ENCODE measurements at regions of chr19 and their contacts with region 1.

Region 1: GRCh38 chr19:7680606-7681339 is at the start of gene TRAPPC5:
- DNase-seq: peak; percentile 86
- ATAC-seq: peak; percentile 60
- H3K4me3 Mint-ChIP-seq: peak within 1 kb of the TSS; percentile 79
- H3K27ac Mint-ChIP-seq: no peak within 1 kb of the TSS
- H3K4me1 Mint-ChIP-seq: peaks cover 16% of the 10 kb centered on the region
- H3K27me3 Mint-ChIP-seq: peaks cover 37% of the 10 kb centered on the region
- CTCF ChIP-seq: peak; percentile 82
- total RNA-seq, gene TRAPPC5: 122 to 127 TPM (median 124 TPM) in 3 replicates

Region 2: DNA sequence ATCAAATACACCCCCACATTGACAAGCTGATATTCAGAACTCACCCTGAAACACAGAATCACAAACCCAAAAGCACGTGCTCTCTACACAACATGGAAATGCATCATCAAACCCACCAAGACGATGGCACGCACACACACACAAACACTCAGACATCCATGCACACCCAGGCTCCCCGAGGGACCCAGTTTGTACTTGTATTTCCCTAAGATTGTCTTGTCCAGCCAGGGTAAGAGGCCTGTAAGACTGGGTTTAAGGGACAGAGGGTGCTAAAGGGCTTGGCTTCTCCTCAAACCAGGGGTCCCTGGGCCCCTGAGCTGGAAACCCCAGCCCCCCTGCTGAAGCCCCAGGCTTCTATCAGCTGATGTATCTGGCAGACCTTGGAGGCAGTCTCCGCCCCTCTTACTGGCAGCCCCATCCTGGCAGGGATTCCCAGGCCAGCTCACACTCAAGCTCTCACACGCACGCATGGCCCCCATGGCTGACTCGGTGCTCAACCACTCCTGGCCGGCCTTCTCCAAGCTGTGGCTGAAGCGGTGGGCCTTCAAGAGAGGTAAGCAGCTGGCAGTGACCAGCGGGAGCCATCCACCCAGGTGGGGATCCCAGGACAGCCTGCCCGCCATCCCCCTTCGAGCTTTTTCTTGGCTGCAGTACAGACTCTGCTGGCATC is 325.5 kb before region 1 on chr19:
- CTCF ChIA-PET with region 1: interaction called, 11 read pairs
- POLR2A ChIA-PET with region 1: no interaction called
- DNase-seq: no peak
- ATAC-seq: no peak
- H3K4me3 Mint-ChIP-seq: no peak overlapping the region
- H3K27ac Mint-ChIP-seq: no peak overlapping the region
- H3K4me1 Mint-ChIP-seq: no peaks in the 10 kb centered on the region
- H3K27me3 Mint-ChIP-seq: peaks cover 21% of the 10 kb centered on the region
- CTCF ChIP-seq: no peak

Region 3: DNA sequence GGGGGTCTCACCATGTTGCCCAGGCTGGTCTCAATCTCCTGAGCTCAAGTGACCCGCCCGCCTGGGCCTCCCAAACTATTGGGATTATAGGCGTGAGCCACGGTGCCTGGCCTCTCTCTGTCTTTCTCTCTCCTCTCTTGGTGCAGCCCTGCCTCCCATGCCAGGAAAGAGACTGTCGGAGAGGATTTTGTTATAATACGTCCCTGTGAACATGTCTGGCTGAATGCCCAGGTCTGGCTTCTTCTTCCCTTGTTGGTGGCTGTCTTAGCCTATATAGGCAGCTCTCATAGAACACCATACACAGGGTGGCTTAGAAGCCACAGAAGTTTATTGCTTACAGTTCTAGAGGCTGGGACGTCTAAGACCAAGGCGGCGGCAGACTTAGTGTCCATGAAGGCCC is 238.3 kb before region 1 on chr19:
- CTCF ChIA-PET with region 1: no interaction called
- POLR2A ChIA-PET with region 1: no interaction called
- DNase-seq: no peak
- ATAC-seq: no peak
- H3K4me3 Mint-ChIP-seq: no peak overlapping the region
- H3K27ac Mint-ChIP-seq: no peak overlapping the region
- H3K4me1 Mint-ChIP-seq: no peaks in the 10 kb centered on the region
- H3K27me3 Mint-ChIP-seq: no peaks in the 10 kb centered on the region
- CTCF ChIP-seq: no peak

Region 4: GRCh38 chr19:7575434-7576040 is 105.2 kb before region 1 on chr19:
- CTCF ChIA-PET with region 1: interaction called, 7 read pairs
- POLR2A ChIA-PET with region 1: interaction called, 14 read pairs
- DNase-seq: no peak
- ATAC-seq: no peak
- H3K4me3 Mint-ChIP-seq: no peak overlapping the region
- H3K27ac Mint-ChIP-seq: no peak overlapping the region
- H3K4me1 Mint-ChIP-seq: no peaks in the 10 kb centered on the region
- H3K27me3 Mint-ChIP-seq: peaks cover 24% of the 10 kb centered on the region
- CTCF ChIP-seq: no peak

Region 5: DNA sequence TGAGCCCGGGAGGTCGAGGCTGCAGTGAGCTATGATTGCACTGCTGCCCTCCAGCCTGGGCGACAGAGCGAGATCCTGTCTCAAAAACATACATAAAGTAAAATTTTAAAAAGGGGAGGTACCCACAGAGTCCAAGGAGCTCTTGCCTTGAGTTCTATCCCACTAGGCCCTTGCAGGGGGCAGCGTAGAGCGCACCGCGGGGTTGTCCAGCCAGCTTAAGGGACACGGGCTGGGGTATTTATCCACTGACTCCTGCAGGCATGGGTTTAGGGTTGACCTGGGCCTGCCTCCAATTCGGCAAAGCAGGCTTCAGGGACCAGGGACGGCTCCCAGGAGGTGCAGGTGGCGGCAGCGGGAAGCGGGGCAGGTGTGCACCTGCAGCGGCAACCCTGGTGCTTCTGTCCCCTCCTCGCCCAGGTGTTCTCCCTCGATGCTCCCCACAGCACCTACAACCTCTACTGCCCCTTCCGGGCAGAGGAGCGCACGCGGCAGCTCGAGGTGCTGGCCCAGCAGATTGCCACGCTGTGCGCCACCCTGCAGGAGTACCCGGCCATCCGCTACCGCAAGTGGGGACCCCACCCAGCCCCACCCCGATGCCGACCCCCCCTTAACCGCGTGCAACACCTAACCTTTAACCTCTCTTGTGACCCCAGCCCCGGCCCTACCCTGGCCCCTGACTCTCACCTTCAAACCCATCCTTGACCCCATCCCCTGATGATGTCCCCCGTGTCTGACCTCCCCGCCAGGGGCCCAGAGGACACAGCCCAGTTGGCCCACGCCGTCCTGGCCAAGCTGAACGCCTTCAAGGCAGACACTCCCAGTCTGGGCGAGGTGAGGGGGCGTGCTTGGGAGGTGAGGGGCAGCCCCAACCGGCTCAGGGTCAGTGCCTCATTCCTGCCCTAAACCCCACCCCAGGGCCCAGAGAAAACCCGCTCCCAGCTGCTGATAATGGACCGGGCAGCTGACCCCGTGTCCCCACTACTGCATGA is 39.2 kb before region 1 on chr19:
- CTCF ChIA-PET with region 1: interaction called, 37 read pairs
- POLR2A ChIA-PET with region 1: no interaction called
- DNase-seq: peak; percentile 66
- ATAC-seq: peak; percentile 57
- H3K4me3 Mint-ChIP-seq: no peak overlapping the region
- H3K27ac Mint-ChIP-seq: no peak overlapping the region
- H3K4me1 Mint-ChIP-seq: no peaks in the 10 kb centered on the region
- H3K27me3 Mint-ChIP-seq: peaks cover 3% of the 10 kb centered on the region
- CTCF ChIP-seq: 0 out of 2 replicates have a peak, but pooled peaks have one; percentile 31

Region 6: DNA sequence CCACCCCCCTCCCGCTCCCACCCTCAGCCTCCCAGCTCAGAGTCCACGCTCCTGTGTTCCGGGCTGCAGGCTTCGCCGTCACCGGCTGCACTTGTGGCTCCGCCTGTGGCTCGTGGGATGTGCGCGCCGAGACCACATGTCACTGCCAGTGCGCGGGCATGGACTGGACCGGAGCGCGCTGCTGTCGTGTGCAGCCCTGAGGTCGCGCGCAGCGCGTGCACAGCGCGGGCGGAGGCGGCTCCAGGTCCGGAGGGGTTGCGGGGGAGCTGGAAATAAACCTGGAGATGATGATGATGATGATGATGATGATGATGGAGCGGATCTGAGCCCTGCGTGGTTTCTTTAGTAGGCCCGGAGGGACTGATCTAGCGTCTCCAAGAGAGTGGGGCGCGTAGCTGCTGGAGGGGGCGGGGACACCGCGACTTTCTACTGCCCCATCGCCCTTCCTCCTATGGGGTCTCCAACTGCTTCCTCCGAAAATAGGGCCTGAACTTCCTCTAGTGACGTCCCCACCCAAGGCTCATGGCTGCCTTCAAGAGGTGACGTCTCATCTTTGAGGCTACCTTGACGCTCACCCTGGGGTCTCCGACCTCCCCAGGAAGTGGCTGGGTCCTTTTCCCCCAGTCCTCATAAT is 10.5 kb before region 1 on chr19:
- CTCF ChIA-PET with region 1: interaction called, 57 read pairs
- POLR2A ChIA-PET with region 1: no interaction called
- DNase-seq: peak; percentile 49
- ATAC-seq: peak; percentile 36
- H3K4me3 Mint-ChIP-seq: peak overlapping the region; percentile 86
- H3K27ac Mint-ChIP-seq: no peak overlapping the region
- H3K4me1 Mint-ChIP-seq: peaks cover 9% of the 10 kb centered on the region
- H3K27me3 Mint-ChIP-seq: peaks cover 90% of the 10 kb centered on the region
- CTCF ChIP-seq: no peak

Region 7: DNA sequence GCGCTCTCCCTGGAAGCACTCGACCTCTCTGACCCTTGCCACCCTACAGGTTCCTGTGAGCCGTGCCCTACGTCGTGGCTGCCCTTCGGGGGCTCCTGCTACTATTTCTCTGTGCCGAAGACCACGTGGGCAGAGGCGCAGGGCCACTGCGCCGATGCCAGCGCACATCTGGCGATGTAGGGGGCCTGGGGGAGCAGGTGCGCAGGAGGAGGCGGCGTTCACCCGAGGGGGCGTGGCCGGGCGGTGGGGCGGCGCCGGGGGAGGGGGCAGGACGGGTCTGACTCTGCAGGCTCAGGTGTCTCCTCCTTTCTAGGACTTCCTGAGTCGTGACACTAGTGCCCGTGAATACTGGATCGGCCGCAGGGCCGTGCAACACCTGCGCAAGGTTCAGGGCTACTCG is 108.7 kb after region 1 on chr19:
- CTCF ChIA-PET with region 1: interaction called, 19 read pairs
- POLR2A ChIA-PET with region 1: no interaction called
- DNase-seq: peak; percentile 87
- ATAC-seq: peak; percentile 75
- H3K4me3 Mint-ChIP-seq: peak overlapping the region; percentile 76
- H3K27ac Mint-ChIP-seq: no peak overlapping the region
- H3K4me1 Mint-ChIP-seq: peaks cover 12% of the 10 kb centered on the region
- H3K27me3 Mint-ChIP-seq: peaks cover 69% of the 10 kb centered on the region
- CTCF ChIP-seq: no peak

Region 8: DNA sequence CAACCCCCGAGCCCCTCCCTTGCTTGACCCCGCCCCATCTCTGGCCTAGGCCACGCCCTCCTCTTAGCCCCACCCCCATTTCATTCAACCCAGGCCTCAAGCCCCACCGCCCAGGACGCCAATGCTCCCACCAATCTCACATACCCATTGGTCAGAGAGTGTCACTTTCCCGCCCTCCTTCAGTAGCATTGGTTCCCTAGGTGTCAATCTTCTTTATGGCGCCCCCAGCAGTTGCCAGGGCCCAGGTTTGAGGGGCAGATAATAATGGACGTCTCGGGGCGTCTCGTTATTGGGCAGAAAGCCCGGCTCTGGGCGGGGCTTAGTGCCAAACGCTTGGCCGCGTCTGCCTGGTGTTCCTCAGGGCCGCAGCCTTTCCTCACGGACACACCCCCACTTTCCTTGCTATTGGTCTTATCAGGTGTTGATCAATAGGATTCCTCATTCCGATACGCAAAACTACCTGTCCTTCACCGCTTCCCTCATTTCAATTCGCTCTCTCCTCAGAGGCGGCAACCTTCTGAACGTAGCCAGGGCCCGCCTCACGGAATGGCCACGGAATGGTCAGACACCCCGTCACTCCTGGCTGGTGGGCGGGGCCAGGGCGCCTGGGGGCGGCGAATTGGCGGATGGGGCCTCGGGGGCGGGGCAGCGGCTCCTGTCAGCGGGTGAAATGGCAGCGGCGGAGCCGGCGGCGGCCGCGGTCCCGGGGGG is 148.9 kb after region 1 on chr19 and contains the start of gene EVI5L:
- CTCF ChIA-PET with region 1: interaction called, 14 read pairs
- POLR2A ChIA-PET with region 1: no interaction called
- DNase-seq: peak; percentile 99
- ATAC-seq: peak; percentile 92
- H3K4me3 Mint-ChIP-seq: peak within 1 kb of the TSS; percentile 91
- H3K27ac Mint-ChIP-seq: no peak within 1 kb of the TSS
- H3K4me1 Mint-ChIP-seq: peaks cover 14% of the 10 kb centered on the region
- H3K27me3 Mint-ChIP-seq: peaks cover 55% of the 10 kb centered on the region
- CTCF ChIP-seq: no peak
- total RNA-seq, gene EVI5L: 10.5 to 13.7 TPM (median 13.6 TPM) in 3 replicates

Measured in WTC11 (cell line).